Uterus (tissue), 4 donors: ENCODE measurements at regions of chr9 and their contacts with region 1.

Region 1: DNA sequence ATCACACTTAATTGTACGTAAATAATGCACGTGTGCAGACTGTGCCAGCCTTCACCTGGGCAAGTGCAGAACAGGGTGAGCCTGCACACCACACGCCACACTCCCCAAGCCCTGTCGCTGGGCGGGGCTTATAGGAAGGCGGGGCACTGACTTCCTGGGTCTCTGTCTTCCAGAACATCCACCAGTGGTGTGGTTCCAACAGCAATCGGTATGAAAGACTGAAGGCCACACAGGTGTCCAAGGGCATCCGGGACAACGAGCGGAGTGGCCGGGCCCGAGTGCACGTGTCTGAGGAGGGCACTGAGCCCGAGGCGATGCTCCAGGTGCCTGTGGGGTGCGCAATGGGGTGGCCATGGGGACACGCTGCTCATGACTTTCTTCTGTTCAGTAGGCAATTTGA is 44.2 kb downstream of the GSN start:
- DNase-seq: peak in 1 of 2 donors; percentile 13
- H3K4me3 ChIP-seq: no peak overlapping the region
- H3K27ac ChIP-seq: peak overlapping the region in 1 of 2 donors; percentile 35
- H3K4me1 ChIP-seq: peaks cover 0 to 10% of the 10 kb centered on the region in 2 donors
- H3K27me3 ChIP-seq: no peaks in the 10 kb centered on the region
- CTCF ChIP-seq: no peak
- POLR2A ChIP-seq: no peak

Region 2: DNA sequence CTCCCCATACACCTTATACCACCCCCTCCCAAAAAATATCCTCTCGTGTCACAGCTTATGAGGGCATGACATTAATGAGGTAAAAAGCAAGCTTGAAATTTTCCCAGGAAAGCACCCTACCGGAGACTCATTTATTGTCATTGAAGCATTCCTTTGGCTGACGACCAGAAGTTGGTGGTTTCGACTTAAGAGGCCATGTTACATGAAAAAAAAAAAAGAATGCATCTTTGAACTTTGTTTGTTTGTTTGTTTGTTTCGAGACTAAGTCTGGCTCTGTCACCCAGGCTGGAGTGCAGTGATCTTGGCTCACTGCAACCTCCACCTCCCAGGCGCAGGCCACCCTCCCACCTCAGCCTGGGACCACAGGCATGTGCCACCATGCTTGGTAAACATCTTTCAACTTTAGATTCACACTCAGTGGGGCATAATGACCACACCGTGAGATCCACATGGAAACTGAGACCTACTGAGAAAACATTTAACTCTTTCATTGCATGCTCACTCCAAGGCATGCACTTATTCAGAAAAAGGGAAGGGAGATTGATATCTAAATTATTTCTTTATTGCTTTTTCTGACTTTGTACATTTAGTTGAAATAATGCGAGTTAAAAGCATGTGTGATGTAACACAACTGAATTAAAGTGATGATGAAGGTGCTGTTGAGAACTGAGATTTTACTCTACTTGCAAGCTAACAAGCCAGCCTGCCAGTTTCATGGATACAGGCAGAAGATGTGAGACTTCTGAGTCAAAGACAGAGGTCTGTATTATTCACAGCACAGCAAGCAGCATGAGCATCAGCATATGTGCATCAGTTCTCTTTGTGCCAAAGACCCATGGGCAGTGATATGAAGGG is 105.4 kb before region 1 on chr9:
- intact Hi-C with region 1: loop called (anchors 5 kb)
- DNase-seq: no peak
- H3K4me3 ChIP-seq: no peak overlapping the region
- H3K27ac ChIP-seq: no peak overlapping the region
- H3K4me1 ChIP-seq: no peaks in the 10 kb centered on the region
- H3K27me3 ChIP-seq: no peaks in the 10 kb centered on the region
- CTCF ChIP-seq: no peak
- POLR2A ChIP-seq: no peak

Region 3: GRCh38 chr9:121640076-121640475 is 327.9 kb after region 1 on chr9:
- intact Hi-C with region 1: no loop called
- DNase-seq: peak; percentile 54 to 60
- H3K4me3 ChIP-seq: no peak overlapping the region
- H3K27ac ChIP-seq: peak overlapping the region in 1 of 2 donors; percentile 26
- H3K4me1 ChIP-seq: peaks cover 0 to 17% of the 10 kb centered on the region in 2 donors
- H3K27me3 ChIP-seq: no peaks in the 10 kb centered on the region
- CTCF ChIP-seq: peak; percentile 50 to 57 (median 54)
- POLR2A ChIP-seq: no peak